ENCODE measurements at regions of chr17 and their contacts with region 1.

Region 1: GRCh38 chr17:55513885-55514591 is 2.8 kb upstream of the SMIM36 start:
- DNase-seq: peak; percentile 47 to 82
- ATAC-seq: peak; percentile 83

Region 2: GRCh38 chr17:54982399-54982798 is 531.6 kb before region 1 on chr17:
- intact Hi-C with region 1: loop called in 1 of 2 experiments (anchors 10 kb)
- DNase-seq: no peak
- ATAC-seq: no peak

Region 3: GRCh38 chr17:55794725-55795482 is 280.9 kb after region 1 on chr17:
- intact Hi-C with region 1: no loop called
- DNase-seq: no peak
- ATAC-seq: no peak